ENCODE measurements at regions of chr11 and their contacts with region 1.

Region 1: DNA sequence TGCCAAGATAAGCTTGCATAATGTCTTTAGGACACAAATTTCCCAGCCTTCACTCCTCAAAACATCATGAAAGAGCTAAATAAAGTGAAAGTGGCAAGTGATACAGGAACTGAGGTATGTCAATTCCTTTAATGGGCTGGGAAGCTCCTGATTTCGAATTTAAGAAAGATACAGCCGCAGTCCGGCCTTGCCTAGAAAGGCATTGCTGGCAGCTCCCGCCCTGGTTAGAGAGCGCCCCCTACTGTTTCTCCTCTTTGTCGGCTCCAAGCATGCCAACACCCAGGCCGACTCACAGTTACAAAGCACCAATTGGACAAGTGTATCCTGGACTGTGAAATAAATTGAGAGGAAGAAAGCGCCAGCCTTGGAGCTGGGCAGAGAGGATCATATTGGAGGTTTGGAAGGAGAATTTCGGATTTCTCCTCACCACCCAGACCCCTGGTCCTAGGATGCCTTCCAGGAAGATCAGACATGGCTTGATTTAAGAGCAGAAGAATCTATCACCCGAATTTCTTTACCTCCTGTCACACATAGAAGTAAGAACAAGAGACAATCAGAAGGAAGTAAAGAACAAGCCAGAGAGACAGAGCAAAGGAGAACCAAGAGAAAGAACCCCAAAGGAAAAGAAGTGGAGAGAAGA is 84.0 kb downstream of the FAM76B start:
- DNase-seq: peak; percentile 84
- H3K4me3 Mint-ChIP-seq: no peak overlapping the region
- H3K27ac Mint-ChIP-seq: no peak overlapping the region
- H3K4me1 Mint-ChIP-seq: peaks cover under 1% of the 10 kb centered on the region
- H3K27me3 Mint-ChIP-seq: no peaks in the 10 kb centered on the region
- CTCF ChIP-seq: peak; percentile 65

Region 2: DNA sequence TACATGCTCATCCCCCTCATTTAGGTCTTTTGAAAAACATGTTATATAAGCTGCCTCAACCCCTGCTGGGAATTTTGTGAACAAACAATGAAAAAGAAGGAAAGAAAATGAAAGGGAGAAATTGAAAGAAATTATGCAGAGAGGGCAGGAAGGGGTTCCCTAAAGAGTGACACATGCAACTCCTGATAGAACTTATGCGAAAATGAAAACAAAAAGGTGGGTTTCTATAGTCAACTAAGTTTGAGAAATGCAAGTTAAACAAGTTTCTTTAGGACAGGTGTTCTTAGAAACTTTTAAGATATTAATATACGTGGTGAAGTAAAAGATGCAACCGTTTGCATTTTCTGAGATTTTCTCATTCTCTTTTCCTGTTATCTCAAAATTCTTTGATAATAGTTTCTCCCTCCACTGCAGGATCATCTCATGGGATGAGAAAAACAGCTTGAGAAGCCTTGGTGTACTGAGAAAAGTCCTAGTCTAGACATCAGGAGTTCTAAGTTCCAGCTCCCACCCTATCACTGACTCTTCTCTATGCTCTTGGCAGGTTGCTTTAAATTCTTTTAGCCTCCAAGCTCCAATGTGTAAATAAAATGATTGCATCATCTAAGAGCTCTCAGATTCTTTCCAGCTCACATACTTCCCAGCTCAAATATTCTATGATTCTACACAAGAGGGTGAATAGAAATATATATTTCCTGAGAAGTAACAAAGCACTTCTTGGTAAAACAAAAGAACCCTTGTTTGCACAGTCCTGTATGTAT is 25.3 kb before region 1 on chr11:
- CTCF ChIA-PET with region 1: interaction called, 10 read pairs
- intact Hi-C with region 1: no loop called
- DNase-seq: no peak
- H3K4me3 Mint-ChIP-seq: no peak overlapping the region
- H3K27ac Mint-ChIP-seq: peak overlapping the region; percentile 80
- H3K4me1 Mint-ChIP-seq: peaks cover 29% of the 10 kb centered on the region
- H3K27me3 Mint-ChIP-seq: no peaks in the 10 kb centered on the region
- CTCF ChIP-seq: no peak

Measured in Calu3 (cell line).